H1 (cell line): ENCODE measurements at regions of chr14 and their contacts with region 1.

Region 1: DNA sequence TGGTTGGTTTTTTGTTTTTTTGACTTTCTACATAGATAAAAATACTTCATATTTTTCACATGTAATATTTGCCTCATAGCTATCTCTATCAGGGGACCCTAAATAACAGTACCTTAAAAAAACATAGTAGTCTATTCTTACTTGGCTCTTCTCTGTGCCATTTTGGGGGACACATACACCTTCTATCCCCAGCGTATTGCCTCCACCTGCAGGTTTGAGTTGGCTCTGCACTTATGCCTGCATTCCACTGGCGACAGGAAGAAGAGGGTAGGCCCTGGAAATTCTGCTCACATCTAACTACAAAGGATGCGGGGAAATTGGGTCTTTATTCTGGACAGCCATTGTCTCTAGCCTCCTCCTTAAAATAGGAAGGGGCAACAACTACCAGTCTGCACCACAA is 13.8 kb upstream of the IFI27L2 start:
- DNase-seq: peak in 1 of 2 experiments; percentile 64
- H3K4me3 ChIP-seq: no peak overlapping the region
- H3K27ac ChIP-seq: no peak overlapping the region
- H3K4me1 ChIP-seq: peaks cover 7 to 16% (median 15%) of the 10 kb centered on the region in 4 experiments; a peak in 6 of 7 replicates
- H3K27me3 ChIP-seq: no peaks in the 10 kb centered on the region
- CTCF ChIP-seq: peak; percentile 67 to 75 (median 74)
- EP300 ChIP-seq: no peak
- POLR2A ChIP-seq: no peak
- RAD21 ChIP-seq: peak; percentile 68 to 77

Region 2: GRCh38 chr14:94011795-94012194 is 131.4 kb before region 1 on chr14:
- CTCF ChIA-PET with region 1: interaction called, 13 read pairs
- POLR2A ChIA-PET with region 1: no interaction called
- DNase-seq: no peak
- H3K4me3 ChIP-seq: no peak overlapping the region
- H3K27ac ChIP-seq: no peak overlapping the region
- H3K4me1 ChIP-seq: no peaks in the 10 kb centered on the region; a peak in 1 of 7 replicates
- H3K27me3 ChIP-seq: peaks cover 0 to 2% (median 0%) of the 10 kb centered on the region in 4 experiments; a peak in 1 of 7 replicates
- CTCF ChIP-seq: no peak
- EP300 ChIP-seq: no peak
- POLR2A ChIP-seq: no peak
- RAD21 ChIP-seq: no peak

Region 3: GRCh38 chr14:94036313-94037050 is 106.8 kb before region 1 on chr14:
- CTCF ChIA-PET with region 1: interaction called, 42 read pairs
- POLR2A ChIA-PET with region 1: interaction called, 3 read pairs
- DNase-seq: peak; percentile 60 to 91
- H3K4me3 ChIP-seq: no peak overlapping the region
- H3K27ac ChIP-seq: no peak overlapping the region
- H3K4me1 ChIP-seq: peaks cover 0 to 9% (median 0%) of the 10 kb centered on the region in 4 experiments; a peak in 2 of 7 replicates
- H3K27me3 ChIP-seq: no peaks in the 10 kb centered on the region
- CTCF ChIP-seq: peak; percentile 81 to 97 (median 97)
- EP300 ChIP-seq: no peak
- POLR2A ChIP-seq: no peak
- RAD21 ChIP-seq: peak; percentile 64 to 72

Region 4: DNA sequence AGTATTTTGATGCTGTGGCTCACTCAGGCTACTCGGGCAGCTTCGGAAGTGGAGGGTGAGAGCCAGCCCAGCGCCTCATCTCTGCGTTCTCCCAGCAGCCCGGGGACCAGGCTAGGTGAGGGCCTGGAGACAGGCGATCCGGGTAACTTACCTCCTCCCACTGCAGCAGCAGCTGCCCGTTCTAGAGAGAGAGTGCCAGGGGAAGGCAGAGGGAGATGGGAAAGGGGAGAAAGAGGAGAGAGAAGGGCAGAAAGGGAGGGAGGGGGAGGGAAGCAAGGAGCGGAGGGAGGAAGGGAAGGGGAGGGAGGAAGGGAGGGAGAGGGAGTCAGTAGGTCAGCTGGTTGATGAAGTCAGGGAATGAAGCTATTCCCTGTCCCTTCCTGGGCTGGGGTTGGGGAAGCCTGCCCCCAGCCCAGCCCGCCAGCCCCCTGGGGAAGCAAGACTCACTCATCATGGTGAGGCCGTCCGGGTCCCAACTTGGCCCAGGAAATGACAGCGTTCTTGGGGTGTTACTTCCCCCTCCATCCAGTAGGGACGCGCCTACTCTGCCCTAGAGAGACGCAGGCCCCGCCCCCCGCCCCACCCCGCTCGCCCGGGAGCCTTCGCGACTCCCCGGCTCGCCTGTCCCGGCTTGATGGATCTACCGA is 14.0 kb before region 1 on chr14 and contains the start of gene IFI27L2:
- CTCF ChIA-PET with region 1: interaction called, 55 read pairs
- POLR2A ChIA-PET with region 1: interaction called, 5 read pairs
- DNase-seq: peak; percentile 47 to 79
- H3K4me3 ChIP-seq: peak within 1 kb of the TSS; percentile 54 to 65 (median 62)
- H3K27ac ChIP-seq: no peak within 1 kb of the TSS
- H3K4me1 ChIP-seq: peaks cover 0 to 4% (median 2%) of the 10 kb centered on the region in 4 experiments; a peak in 3 of 7 replicates
- H3K27me3 ChIP-seq: no peaks in the 10 kb centered on the region; a peak in 1 of 7 replicates
- CTCF ChIP-seq: peak in 2 of 3 experiments; percentile 17 to 42; a peak in 3 of 4 replicates
- EP300 ChIP-seq: no peak
- POLR2A ChIP-seq: 0 out of 3 replicates have a peak, but pooled peaks of 1 of the 2 experiments have one; percentile 23
- RAD21 ChIP-seq: 0 out of 4 replicates have a peak, but pooled peaks of 1 of the 2 experiments have one; percentile 9
- total RNA-seq, gene IFI27L2: 14.0 and 19.8 TPM in 2 replicates

Region 5: GRCh38 chr14:94153750-94154342 is 10.6 kb after region 1 on chr14:
- CTCF ChIA-PET with region 1: interaction called, 20 read pairs
- POLR2A ChIA-PET with region 1: no interaction called
- DNase-seq: no peak
- H3K4me3 ChIP-seq: no peak overlapping the region
- H3K27ac ChIP-seq: no peak overlapping the region
- H3K4me1 ChIP-seq: no peaks in the 10 kb centered on the region
- H3K27me3 ChIP-seq: no peaks in the 10 kb centered on the region
- CTCF ChIP-seq: no peak
- EP300 ChIP-seq: no peak
- POLR2A ChIP-seq: no peak
- RAD21 ChIP-seq: no peak

Region 6: DNA sequence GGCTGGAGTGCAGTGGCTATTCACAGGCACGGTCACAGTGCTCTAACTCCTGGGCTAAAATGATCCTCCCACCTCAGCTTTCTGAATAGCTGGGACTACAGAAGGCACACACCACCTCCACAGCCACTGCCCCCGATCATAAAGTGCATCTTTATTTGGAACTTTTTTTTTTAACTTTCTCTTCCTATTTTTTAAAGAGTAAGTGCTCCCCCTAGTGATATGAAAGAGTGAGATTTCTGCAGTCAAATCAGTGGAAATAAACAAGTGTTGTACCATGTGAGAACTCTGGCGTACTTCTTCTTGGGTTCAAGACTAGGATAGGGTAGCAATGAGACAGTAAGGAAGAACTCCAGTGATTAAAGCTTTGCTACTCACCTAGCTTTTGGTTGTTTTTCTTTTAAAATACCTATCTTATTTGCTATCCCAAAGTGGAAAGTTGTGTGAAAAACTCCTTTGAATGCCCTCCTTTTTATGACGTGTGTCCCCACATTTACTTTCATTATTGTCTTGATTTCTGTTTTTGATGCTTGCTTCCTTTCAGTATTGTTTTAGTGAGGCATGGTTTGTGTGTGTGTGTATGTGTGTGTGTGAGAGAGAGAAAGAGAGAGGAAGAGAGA is 37.5 kb after region 1 on chr14:
- CTCF ChIA-PET with region 1: interaction called, 31 read pairs
- POLR2A ChIA-PET with region 1: interaction called, 4 read pairs
- DNase-seq: no peak
- H3K4me3 ChIP-seq: no peak overlapping the region
- H3K27ac ChIP-seq: no peak overlapping the region
- H3K4me1 ChIP-seq: peaks cover 0 to 6% (median 3%) of the 10 kb centered on the region in 4 experiments; a peak in 5 of 7 replicates
- H3K27me3 ChIP-seq: peaks cover 0 to 2% (median 0%) of the 10 kb centered on the region in 4 experiments; a peak in 1 of 7 replicates
- CTCF ChIP-seq: peak in 2 of 3 experiments; percentile 35; a peak in 2 of 4 replicates
- EP300 ChIP-seq: no peak
- POLR2A ChIP-seq: no peak
- RAD21 ChIP-seq: peak; percentile 55 to 59